Right cardiac atrium (tissue), 5 donors: ENCODE measurements at regions of chr6 and their contacts with region 1.

Region 1: GRCh38 chr6:53986165-53986720 is 125.0 kb upstream of the MLIP start:
- DNase-seq: peak in 2 of 3 donors; percentile 37 to 69
- ATAC-seq: peak; percentile 65 to 74
- H3K4me3 ChIP-seq: no peak overlapping the region
- H3K27ac ChIP-seq: no peak overlapping the region
- H3K4me1 ChIP-seq: peaks cover 11% of the 10 kb centered on the region
- H3K27me3 ChIP-seq: no peaks in the 10 kb centered on the region

Region 2: DNA sequence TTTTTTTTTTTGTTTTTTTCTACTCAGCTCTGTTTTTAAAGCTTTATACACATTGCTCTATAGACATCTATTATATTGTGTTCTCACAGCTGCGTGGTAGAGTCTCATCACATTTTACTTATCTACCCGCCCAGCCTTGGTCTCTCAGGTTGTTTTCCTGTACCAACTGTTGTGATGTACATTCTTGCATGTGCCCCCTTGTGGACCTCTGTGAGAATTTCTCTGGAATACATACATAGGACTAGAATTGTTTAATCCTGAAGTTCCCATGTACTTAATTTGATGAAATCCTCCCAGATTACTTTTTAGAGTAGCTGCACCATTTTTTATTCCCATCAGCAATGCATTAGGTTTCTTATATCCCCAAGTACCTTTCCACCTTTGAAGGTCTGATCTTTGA is 281.6 kb after region 1 on chr6:
- intact Hi-C with region 1: loop called in 2 of 4 experiments (anchors 10 kb)
- DNase-seq: no peak
- ATAC-seq: peak in 1 of 2 donors; percentile 33
- H3K4me3 ChIP-seq: no peak overlapping the region
- H3K27ac ChIP-seq: no peak overlapping the region
- H3K4me1 ChIP-seq: no peaks in the 10 kb centered on the region
- H3K27me3 ChIP-seq: no peaks in the 10 kb centered on the region

Region 3: DNA sequence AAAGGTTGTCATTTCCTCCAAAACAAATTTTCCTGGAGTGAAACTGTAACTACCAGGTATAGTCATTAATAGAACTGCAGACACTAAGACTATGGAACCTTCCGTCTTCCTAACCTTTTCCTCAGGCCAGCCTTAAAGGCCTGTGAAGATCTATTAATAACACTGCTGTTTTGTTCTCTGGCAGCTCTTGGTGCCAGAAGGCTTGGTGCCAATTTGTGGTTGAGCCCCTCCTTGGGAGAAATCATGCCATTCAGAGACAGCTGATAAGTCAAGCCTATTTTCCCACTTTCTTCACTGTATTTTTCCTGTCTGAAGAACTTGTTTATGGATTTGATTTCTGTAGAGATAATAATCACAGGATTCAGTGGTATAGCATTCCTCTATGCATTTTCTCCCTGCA is 1252.9 kb after region 1 on chr6:
- intact Hi-C with region 1: loop called in 1 of 4 experiments (anchors 10 kb)
- DNase-seq: peak in 2 of 3 donors; percentile 26 to 48
- ATAC-seq: peak in 1 of 2 donors; percentile 18
- H3K4me3 ChIP-seq: no peak overlapping the region
- H3K27ac ChIP-seq: no peak overlapping the region
- H3K4me1 ChIP-seq: no peaks in the 10 kb centered on the region
- H3K27me3 ChIP-seq: no peaks in the 10 kb centered on the region